ENCODE measurements at regions of chr11 and their contacts with region 1.

Region 1: GRCh38 chr11:78079232-78080083 is at the start of gene NDUFC2:
- DNase-seq: peak; percentile 85
- H3K4me3 ChIP-seq: peak within 1 kb of the TSS; percentile 83 to 97 (median 94)
- H3K27ac ChIP-seq: peak within 1 kb of the TSS; percentile 80
- H3K4me1 ChIP-seq: peaks cover 18% of the 10 kb centered on the region
- H3K27me3 ChIP-seq: no peaks in the 10 kb centered on the region
- CTCF ChIP-seq: no peak
- POLR2A ChIP-seq: peak; percentile 97
- total RNA-seq, gene NDUFC2: 226 and 236 TPM in 2 replicates

Region 2: DNA sequence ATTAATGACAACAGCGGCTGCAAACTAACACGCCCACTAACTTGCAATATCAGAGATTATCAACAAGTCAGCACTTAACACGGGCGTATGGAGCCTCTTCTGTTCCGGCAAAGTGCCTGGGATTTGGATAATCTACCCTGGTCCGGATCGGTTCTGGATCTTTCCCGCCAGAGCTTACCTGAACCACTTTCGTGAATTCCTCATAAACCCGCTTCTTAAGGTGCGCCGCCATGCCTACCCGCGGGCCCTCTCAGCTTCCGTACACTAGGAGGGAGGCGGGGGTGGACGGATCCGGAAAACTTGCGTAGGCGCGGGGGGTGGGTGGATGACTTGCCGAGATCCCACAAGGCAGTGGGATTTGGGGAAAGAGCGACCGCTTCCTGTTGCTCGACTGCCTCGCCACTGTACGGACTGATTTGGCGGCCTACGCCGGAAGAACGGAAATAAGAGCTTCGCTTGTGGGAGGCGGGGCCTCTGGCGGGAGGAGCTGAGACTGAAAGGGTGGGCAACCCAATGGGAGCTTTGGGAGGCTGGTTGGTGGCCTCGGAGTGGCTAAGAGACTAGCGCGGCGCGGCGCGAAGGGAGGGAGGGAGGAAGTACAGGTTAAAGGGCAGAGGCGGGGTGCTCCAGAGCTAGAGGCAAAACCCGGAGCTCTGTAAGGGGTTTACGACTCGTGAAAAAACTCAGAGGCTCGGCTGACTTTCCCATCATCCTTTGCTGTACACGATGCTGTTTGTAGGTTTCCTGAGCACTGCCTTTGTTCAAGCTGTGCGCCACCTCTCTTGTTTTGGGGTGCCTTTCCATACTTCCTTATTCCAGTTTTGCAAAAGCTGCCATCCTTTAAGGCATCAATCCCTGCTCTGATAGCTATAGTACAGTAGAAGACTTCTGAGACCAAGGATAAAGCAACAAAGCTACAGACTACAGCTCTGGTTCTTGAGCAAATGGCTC is 84.8 kb before region 1 on chr11 and contains the start of gene INTS4:
- CTCF ChIA-PET with region 1: interaction called, 3 read pairs
- POLR2A ChIA-PET with region 1: no interaction called
- dilution Hi-C with region 1: no loop called
- intact Hi-C with region 1: loop called (anchors 1 kb)
- DNase-seq: peak; percentile 100
- H3K4me3 ChIP-seq: peak within 1 kb of the TSS; percentile 75 to 99 (median 95)
- H3K27ac ChIP-seq: peak within 1 kb of the TSS; percentile 47
- H3K4me1 ChIP-seq: peaks cover 15% of the 10 kb centered on the region
- H3K27me3 ChIP-seq: no peaks in the 10 kb centered on the region
- CTCF ChIP-seq: no peak
- POLR2A ChIP-seq: peak; percentile 77
- total RNA-seq, gene INTS4: 37.8 and 39.2 TPM in 2 replicates

Region 3: GRCh38 chr11:78139422-78140391 is 60.2 kb after region 1 on chr11 and contains the start of gene ALG8:
- CTCF ChIA-PET with region 1: no interaction called
- POLR2A ChIA-PET with region 1: no interaction called
- dilution Hi-C with region 1: no loop called
- intact Hi-C with region 1: loop called (anchors 1 kb)
- DNase-seq: peak; percentile 99
- H3K4me3 ChIP-seq: peak within 1 kb of the TSS; percentile 52 to 84 (median 69)
- H3K27ac ChIP-seq: peak within 1 kb of the TSS; percentile 60
- H3K4me1 ChIP-seq: peaks cover 15% of the 10 kb centered on the region
- H3K27me3 ChIP-seq: no peaks in the 10 kb centered on the region
- CTCF ChIP-seq: no peak
- POLR2A ChIP-seq: peak; percentile 89
- total RNA-seq, gene ALG8: 38.1 and 43.9 TPM in 2 replicates

Region 4: GRCh38 chr11:78188286-78189173 is 109.1 kb after region 1 on chr11 and contains the starts of genes KCTD21 and USP35:
- CTCF ChIA-PET with region 1: no interaction called
- POLR2A ChIA-PET with region 1: interaction called, 3 read pairs
- dilution Hi-C with region 1: no loop called
- intact Hi-C with region 1: loop called (anchors 2 kb)
- DNase-seq: peak; percentile 98
- H3K4me3 ChIP-seq: peak within 1 kb of the TSS; percentile 68 to 81 (median 71)
- H3K27ac ChIP-seq: peak within 1 kb of the TSS; percentile 14
- H3K4me1 ChIP-seq: peaks cover 40% of the 10 kb centered on the region
- H3K27me3 ChIP-seq: no peaks in the 10 kb centered on the region
- CTCF ChIP-seq: no peak
- POLR2A ChIP-seq: peak; percentile 90
- total RNA-seq, gene KCTD21: 8.5 and 9.5 TPM in 2 replicates
- total RNA-seq, gene USP35: 10.3 and 12.4 TPM in 2 replicates